HAP-1 (cell line): ENCODE measurements at regions of chr13 and their contacts with region 1.

Region 1: DNA sequence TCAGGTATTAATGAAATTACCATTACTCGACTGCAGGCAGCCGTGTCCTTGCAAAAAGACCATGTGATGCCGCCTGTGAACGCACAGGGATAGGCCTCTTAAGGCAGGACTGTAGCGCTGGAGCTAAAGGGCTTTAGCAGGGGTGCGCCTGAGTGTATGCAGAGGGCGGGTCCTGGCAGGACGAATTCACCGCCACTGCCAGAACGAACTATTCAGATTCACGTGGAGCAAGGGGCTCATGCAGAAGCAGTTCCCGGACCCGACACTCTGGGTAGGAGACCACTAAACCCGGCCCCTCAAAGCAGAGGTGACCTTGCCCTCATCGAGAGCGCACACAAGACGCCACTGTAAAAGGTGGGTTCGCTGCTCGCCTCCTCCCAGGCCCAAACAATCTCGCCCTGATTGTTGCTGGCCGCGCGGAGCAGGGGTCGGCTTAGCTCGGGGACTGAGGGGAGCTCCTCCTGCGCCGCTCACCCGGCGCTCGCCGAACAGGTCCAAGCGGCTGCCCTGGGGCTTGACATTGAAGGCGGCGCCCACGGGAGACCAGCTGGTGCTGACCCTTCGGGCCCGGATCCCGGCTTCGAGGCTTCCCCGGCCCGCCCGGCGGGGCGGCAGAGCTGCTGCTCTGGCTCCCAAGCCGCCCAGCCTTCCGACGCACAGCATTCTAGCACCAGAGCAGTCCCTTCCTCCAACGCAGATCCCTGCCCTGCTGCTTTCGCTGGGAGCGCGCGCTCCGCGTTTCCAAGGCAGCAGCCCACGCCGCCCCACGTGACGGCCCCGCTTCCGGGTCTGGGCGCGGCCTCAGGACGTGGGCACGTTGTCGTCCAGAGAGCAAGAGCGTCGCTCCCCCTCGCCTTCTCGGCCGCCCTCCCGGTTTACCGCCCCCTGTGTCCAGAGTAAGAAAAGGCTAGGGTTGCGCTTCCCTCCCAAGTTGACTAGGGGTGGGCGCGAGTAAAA is at the start of gene MIPEP:
- DNase-seq: peak; percentile 88 to 94
- H3K4me3 ChIP-seq: peak within 1 kb of the TSS; percentile 87
- H3K4me1 ChIP-seq: peaks cover 13% of the 10 kb centered on the region
- H3K27me3 ChIP-seq: no peaks in the 10 kb centered on the region

Region 2: GRCh38 chr13:23372264-23372906 is 516.6 kb before region 1 on chr13:
- in situ Hi-C with region 1: loop called (anchors 25 kb)
- DNase-seq: no peak
- H3K4me3 ChIP-seq: no peak overlapping the region
- H3K4me1 ChIP-seq: peaks cover 15% of the 10 kb centered on the region
- H3K27me3 ChIP-seq: no peaks in the 10 kb centered on the region